CD8-positive, alpha-beta T cell (primary cell): ENCODE measurements at regions of chr10 and their contacts with region 1.

Region 1: GRCh38 chr10:110918643-110919363 is at the start of gene BBIP1:
- DNase-seq: peak in 5 of 9 experiments; percentile 95 to 100 (median 95)
- ATAC-seq: peak; percentile 93
- H3K4me3 ChIP-seq: peak within 1 kb of the TSS; percentile 92 to 100
- H3K4me3 Mint-ChIP-seq: peak within 1 kb of the TSS; percentile 98
- H3K27ac ChIP-seq: peak within 1 kb of the TSS; percentile 99 to 100
- H3K27ac Mint-ChIP-seq: peak within 1 kb of the TSS; percentile 99
- H3K4me1 ChIP-seq: peaks cover 16% of the 10 kb centered on the region
- H3K4me1 Mint-ChIP-seq: peaks cover 51% of the 10 kb centered on the region
- H3K27me3 ChIP-seq: no peaks in the 10 kb centered on the region
- H3K27me3 Mint-ChIP-seq: no peaks in the 10 kb centered on the region
- CTCF ChIP-seq: no peak
- total RNA-seq, gene BBIP1: 9.5 to 11.1 TPM

Region 2: GRCh38 chr10:110210674-110211464 is 707.9 kb before region 1 on chr10:
- CTCF ChIA-PET with region 1: no interaction called
- POLR2A ChIA-PET with region 1: interaction called, 12 read pairs
- intact Hi-C with region 1: loop called in 1 of 2 experiments (anchors 5 kb)
- DNase-seq: peak; percentile 77 to 94 (median 90)
- ATAC-seq: peak; percentile 48
- H3K4me3 ChIP-seq: peak overlapping the region; percentile 59 to 91
- H3K4me3 Mint-ChIP-seq: peak overlapping the region; percentile 94
- H3K27ac ChIP-seq: peak overlapping the region; percentile 60 to 90
- H3K27ac Mint-ChIP-seq: peak overlapping the region; percentile 99
- H3K4me1 ChIP-seq: peaks cover 22% of the 10 kb centered on the region
- H3K4me1 Mint-ChIP-seq: peaks cover 47% of the 10 kb centered on the region
- H3K27me3 ChIP-seq: peaks cover 0 to 13% of the 10 kb centered on the region in 2 experiments
- H3K27me3 Mint-ChIP-seq: peaks cover 17% of the 10 kb centered on the region
- CTCF ChIP-seq: no peak

Region 3: GRCh38 chr10:110567201-110568054 is 351.4 kb before region 1 on chr10 and contains the start of gene SMC3:
- CTCF ChIA-PET with region 1: no interaction called
- POLR2A ChIA-PET with region 1: interaction called, 3 read pairs
- intact Hi-C with region 1: loop called (anchors 1 kb)
- DNase-seq: peak; percentile 83 to 95 (median 90)
- ATAC-seq: peak; percentile 89
- H3K4me3 ChIP-seq: peak within 1 kb of the TSS; percentile 92 to 93
- H3K4me3 Mint-ChIP-seq: peak within 1 kb of the TSS; percentile 97
- H3K27ac ChIP-seq: peak within 1 kb of the TSS; percentile 85 to 86
- H3K27ac Mint-ChIP-seq: peak within 1 kb of the TSS; percentile 96
- H3K4me1 ChIP-seq: peaks cover 44% of the 10 kb centered on the region
- H3K4me1 Mint-ChIP-seq: peaks cover 44% of the 10 kb centered on the region
- H3K27me3 ChIP-seq: no peaks in the 10 kb centered on the region
- H3K27me3 Mint-ChIP-seq: peaks cover 12% of the 10 kb centered on the region
- CTCF ChIP-seq: no peak
- total RNA-seq, gene SMC3: 35.1 to 37.9 TPM

Region 4: GRCh38 chr10:110864662-110865140 is 54.1 kb before region 1 on chr10:
- CTCF ChIA-PET with region 1: interaction called, 3 read pairs
- POLR2A ChIA-PET with region 1: interaction called, 10 read pairs
- intact Hi-C with region 1: loop called in 1 of 2 experiments (anchors 1 kb)
- DNase-seq: peak in 7 of 9 experiments; percentile 45 to 96 (median 62)
- ATAC-seq: peak; percentile 63
- H3K4me3 ChIP-seq: peak overlapping the region; percentile 5 to 18
- H3K4me3 Mint-ChIP-seq: peak overlapping the region; percentile 78
- H3K27ac ChIP-seq: peak overlapping the region; percentile 77 to 97
- H3K27ac Mint-ChIP-seq: peak overlapping the region; percentile 98
- H3K4me1 ChIP-seq: peaks cover 99% of the 10 kb centered on the region
- H3K4me1 Mint-ChIP-seq: peaks cover 98% of the 10 kb centered on the region
- H3K27me3 ChIP-seq: no peaks in the 10 kb centered on the region
- H3K27me3 Mint-ChIP-seq: no peaks in the 10 kb centered on the region
- CTCF ChIP-seq: no peak

Region 5: DNA sequence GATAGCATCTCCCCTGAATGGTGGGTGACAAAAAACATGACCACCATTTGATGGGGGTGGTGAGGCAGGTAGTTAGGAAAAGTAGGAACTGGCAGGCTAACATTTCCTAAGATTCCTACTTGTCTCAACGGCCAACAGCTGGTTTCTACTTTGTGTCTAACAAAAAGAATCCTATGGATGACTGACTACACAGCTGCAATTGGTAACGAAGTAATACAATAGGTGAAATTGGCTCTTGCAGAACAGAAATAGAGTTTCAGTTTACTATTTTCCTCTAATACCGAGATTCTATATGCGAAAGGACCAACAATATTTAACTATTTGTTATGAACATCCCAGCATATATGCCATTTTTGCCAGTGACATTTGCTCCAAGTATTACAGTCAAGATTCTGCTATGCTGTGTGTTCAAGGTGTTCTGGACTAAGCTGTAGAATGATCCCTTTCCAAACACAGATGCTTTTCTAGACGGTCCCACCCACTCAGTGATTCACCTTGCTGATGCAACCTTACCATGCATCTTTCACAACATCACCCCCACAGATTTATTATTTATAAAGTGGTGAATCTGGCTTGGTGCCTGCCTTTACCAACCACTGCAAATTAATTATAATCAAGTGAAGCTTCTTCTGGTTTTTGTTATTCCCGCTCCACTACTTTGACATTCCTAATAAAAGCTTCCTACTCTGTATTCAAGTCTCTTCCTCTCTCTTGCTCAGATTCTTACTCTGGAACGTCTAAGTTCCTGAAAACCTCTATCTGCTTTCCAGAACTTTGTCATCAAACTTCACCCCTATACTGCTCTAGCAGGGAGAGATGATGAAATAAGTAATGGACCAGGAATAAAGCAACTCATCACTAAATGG is 16.6 kb before region 1 on chr10:
- CTCF ChIA-PET with region 1: interaction called, 13 read pairs
- POLR2A ChIA-PET with region 1: interaction called, 17 read pairs
- intact Hi-C with region 1: loop called in 1 of 2 experiments (anchors 2 kb)
- DNase-seq: no peak
- ATAC-seq: peak; percentile 48
- H3K4me3 ChIP-seq: no peak overlapping the region
- H3K4me3 Mint-ChIP-seq: no peak overlapping the region
- H3K27ac ChIP-seq: no peak overlapping the region
- H3K27ac Mint-ChIP-seq: peak overlapping the region; percentile 71
- H3K4me1 ChIP-seq: no peaks in the 10 kb centered on the region
- H3K4me1 Mint-ChIP-seq: peaks cover 31% of the 10 kb centered on the region
- H3K27me3 ChIP-seq: no peaks in the 10 kb centered on the region
- H3K27me3 Mint-ChIP-seq: no peaks in the 10 kb centered on the region
- CTCF ChIP-seq: no peak

Region 6: DNA sequence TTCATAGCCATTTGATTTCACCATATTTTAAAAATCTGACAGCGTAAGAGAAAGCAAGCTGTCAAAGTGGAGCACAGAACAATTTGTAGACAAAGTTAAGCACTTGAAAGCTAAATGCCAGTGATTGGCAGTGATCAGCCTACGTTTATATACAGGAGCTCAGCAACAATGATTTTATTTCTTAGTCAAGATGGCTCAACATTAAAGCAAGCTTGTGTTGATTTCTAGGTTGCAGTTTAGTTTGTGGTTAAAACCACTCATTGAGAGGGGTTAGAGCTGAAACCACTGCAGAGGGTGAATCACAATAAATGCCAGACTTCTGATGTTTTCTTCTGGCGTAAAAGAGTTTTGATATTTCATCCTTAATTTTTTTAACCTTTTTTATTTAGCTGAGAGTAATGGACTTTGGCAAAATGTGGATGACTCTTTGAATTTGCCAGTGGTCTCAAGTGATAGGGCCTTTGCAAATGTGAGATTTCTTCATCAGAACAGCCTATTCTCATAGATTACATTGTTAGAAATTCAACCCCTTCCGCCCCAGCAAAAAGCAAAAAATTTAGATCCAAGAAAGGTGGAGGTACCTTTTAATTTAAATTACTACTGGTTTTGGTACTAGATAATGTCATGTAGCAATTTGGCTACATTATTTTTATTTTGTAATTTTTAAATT is 74.4 kb after region 1 on chr10:
- CTCF ChIA-PET with region 1: no interaction called
- POLR2A ChIA-PET with region 1: interaction called, 3 read pairs
- intact Hi-C with region 1: loop called (anchors 2 to 5 kb)
- DNase-seq: peak in 4 of 9 experiments; percentile 19 to 75 (median 45)
- ATAC-seq: peak; percentile 97
- H3K4me3 ChIP-seq: peak overlapping the region; percentile 5 to 14
- H3K4me3 Mint-ChIP-seq: peak overlapping the region; percentile 70
- H3K27ac ChIP-seq: peak overlapping the region in 1 of 2 experiments; percentile 20
- H3K27ac Mint-ChIP-seq: peak overlapping the region; percentile 72
- H3K4me1 ChIP-seq: peaks cover 29% of the 10 kb centered on the region
- H3K4me1 Mint-ChIP-seq: peaks cover 45% of the 10 kb centered on the region
- H3K27me3 ChIP-seq: no peaks in the 10 kb centered on the region
- H3K27me3 Mint-ChIP-seq: no peaks in the 10 kb centered on the region
- CTCF ChIP-seq: no peak